Prostate gland (tissue), 2 donors: ENCODE measurements at regions of chr19 and their contacts with region 1.

Region 1: GRCh38 chr19:12983542-12984142 is 11.6 kb upstream of the NFIX start:
- DNase-seq: peak; percentile 78
- H3K4me3 ChIP-seq: peak overlapping the region; percentile 18 to 26
- H3K27ac ChIP-seq: peak overlapping the region; percentile 47 to 70
- H3K4me1 ChIP-seq: no peaks in the 10 kb centered on the region
- H3K27me3 ChIP-seq: no peaks in the 10 kb centered on the region
- CTCF ChIP-seq: peak; percentile 98 to 99 (median 99)
- POLR2A ChIP-seq: peak; percentile 24

Region 2: GRCh38 chr19:12703046-12703445 is 280.6 kb before region 1 on chr19:
- intact Hi-C with region 1: no loop called
- DNase-seq: no peak
- H3K4me3 ChIP-seq: no peak overlapping the region
- H3K27ac ChIP-seq: no peak overlapping the region
- H3K4me1 ChIP-seq: no peaks in the 10 kb centered on the region
- H3K27me3 ChIP-seq: no peaks in the 10 kb centered on the region
- CTCF ChIP-seq: no peak
- POLR2A ChIP-seq: no peak

Region 3: GRCh38 chr19:12945479-12946091 is 38.1 kb before region 1 on chr19 and contains the start of gene RAD23A:
- intact Hi-C with region 1: no loop called
- DNase-seq: peak; percentile 96
- H3K4me3 ChIP-seq: peak within 1 kb of the TSS; percentile 91 to 93
- H3K27ac ChIP-seq: peak within 1 kb of the TSS; percentile 89 to 91
- H3K4me1 ChIP-seq: peaks cover 21% of the 10 kb centered on the region
- H3K27me3 ChIP-seq: no peaks in the 10 kb centered on the region
- CTCF ChIP-seq: peak in 2 of 4 experiments; percentile 38 to 42
- POLR2A ChIP-seq: peak; percentile 89
- total RNA-seq, gene RAD23A: 113 to 145 TPM

Region 4: DNA sequence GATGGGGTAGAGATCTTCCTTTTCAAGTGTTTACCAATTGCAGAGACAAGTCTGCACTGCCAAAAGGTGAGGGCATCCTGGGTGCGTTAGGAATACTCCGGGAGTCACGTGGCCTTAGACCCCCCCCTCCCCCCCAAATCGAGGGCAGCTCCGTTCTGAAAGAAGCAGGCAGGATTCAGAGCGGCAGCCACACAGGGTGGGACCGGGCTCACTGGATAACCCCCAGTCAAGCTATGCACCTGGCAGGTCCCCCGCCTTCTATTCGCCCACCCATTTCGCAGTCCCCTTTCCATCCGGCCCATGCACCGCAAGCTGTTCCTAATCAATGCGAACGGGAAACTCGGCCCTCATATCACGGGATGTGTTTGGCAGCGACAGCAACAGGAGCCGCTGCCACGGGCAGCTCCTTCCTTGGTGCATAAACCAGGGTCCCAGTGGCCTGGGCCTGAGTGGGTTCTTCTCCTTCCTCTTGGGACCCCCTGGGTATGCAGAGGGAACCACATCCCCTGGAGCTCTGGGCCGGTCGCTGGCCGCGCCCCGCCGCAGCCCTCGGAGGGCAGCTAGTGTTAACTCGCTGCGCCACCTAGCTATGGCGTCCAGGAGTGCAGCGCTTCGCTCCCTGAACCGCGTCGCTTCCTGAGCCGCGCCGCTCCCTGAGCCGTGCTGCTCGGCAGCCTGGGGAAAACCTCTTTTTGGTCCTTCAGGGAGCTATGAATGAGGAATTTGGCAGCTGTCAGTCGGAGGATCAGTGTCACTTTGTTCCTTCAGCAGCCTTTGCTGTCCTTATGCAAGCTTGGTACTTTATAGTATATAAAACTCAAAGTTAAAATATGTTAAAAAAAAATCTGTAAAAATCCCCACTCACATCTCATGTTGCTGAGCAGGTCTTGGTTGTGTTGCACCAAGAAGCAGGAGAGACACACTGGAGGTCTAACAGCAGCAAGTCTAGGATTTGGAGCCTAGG is 77.6 kb after region 1 on chr19:
- intact Hi-C with region 1: loop called (anchors 1 kb)
- DNase-seq: peak; percentile 81
- H3K4me3 ChIP-seq: peak overlapping the region; percentile 14 to 22
- H3K27ac ChIP-seq: peak overlapping the region; percentile 95 to 96
- H3K4me1 ChIP-seq: peaks cover 66% of the 10 kb centered on the region
- H3K27me3 ChIP-seq: no peaks in the 10 kb centered on the region
- CTCF ChIP-seq: peak; percentile 85 to 98 (median 94)
- POLR2A ChIP-seq: no peak

Region 5: DNA sequence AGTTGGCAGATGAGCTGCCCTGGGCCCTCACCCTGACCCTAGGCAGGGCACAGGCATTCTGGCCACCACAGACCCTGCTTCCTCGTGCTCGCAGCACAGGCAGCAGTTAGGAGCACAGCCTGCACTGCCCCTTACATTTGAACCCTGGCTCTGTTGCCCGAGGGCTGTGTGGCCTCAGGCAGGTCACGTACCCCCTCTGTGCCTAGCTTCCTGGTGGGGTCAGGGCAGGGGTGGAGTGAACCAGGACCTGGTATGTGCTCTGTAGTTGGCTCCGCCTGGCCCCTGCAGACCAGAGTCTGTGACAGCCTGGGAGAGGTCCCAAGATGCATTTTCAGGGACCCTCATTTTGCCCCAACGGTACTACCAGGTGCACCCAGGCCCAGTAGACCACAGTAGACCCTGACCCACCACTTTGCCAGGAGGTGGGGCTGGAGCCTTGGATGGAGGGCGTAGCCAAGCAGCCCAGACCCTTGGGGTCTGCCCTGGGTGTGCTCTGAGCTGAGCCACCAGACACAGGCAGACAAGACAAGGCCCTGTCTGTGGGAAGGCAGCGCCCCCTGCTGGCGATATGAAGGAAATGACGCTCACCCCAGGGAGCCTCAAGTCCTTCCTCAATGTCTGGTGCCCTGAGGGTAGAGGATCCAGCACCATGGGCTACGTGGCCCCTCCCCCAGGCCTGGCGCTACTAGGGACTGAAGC is 109.9 kb after region 1 on chr19:
- intact Hi-C with region 1: loop called (anchors 2 kb)
- DNase-seq: peak; percentile 74
- H3K4me3 ChIP-seq: no peak overlapping the region
- H3K27ac ChIP-seq: peak overlapping the region; percentile 56 to 88
- H3K4me1 ChIP-seq: peaks cover 11% of the 10 kb centered on the region
- H3K27me3 ChIP-seq: no peaks in the 10 kb centered on the region
- CTCF ChIP-seq: peak; percentile 93 to 97 (median 95)
- POLR2A ChIP-seq: no peak

Region 6: GRCh38 chr19:13262450-13262849 is 278.8 kb after region 1 on chr19:
- intact Hi-C with region 1: loop called (anchors 2 kb)
- DNase-seq: no peak
- H3K4me3 ChIP-seq: no peak overlapping the region
- H3K27ac ChIP-seq: no peak overlapping the region
- H3K4me1 ChIP-seq: no peaks in the 10 kb centered on the region
- H3K27me3 ChIP-seq: no peaks in the 10 kb centered on the region
- CTCF ChIP-seq: peak in 3 of 4 experiments; percentile 54 to 77 (median 75)
- POLR2A ChIP-seq: no peak